PC-3 (cell line): ENCODE measurements at regions of chr16 and their contacts with region 1.

Region 1: DNA sequence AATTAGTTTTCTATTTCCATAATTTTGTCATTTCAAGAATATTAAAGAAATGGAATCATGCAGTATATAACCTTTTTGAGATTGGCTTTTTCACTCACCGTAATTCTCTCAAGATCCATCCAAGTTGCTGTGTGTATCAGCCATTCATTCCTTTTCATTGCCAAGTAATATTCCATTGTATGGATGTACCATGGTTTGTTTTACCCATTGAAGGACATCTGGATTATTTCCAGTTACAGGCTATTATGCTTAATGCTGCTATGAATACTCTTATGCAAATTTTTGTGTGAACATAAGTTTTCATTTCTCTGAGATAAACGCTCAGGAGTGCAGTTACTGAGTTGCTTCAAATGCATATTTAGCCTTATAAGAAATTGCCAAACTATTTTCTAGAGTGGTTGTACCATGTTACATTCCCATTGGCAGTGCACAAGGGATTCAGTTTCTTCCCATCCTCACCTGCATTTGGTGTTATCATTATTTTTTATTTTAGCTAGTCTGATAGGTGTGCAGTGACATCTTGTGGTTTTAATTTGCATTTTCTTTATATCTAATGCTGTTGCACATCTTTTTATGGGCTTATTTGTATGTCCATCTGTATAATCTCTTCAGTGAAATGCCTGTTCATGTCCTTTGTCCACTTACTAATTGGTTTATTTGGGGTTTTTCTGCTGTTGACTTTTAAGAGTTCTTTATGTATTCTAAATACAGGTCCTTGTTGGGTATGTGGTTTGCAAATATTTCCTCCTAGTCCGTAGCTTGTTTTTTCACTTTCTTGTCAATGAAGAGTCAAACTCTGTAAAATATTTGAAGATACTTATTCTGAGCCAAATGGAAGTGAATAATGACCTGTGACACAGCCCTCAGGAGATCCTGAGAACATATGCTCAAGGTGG is 32.7 kb downstream of the BMERB1 start:
- DNase-seq: peak; percentile 60
- ATAC-seq: no peak
- H3K4me3 ChIP-seq: no peak overlapping the region
- H3K27ac ChIP-seq: no peak overlapping the region
- H3K4me1 ChIP-seq: peaks cover 11% of the 10 kb centered on the region
- H3K27me3 ChIP-seq: no peaks in the 10 kb centered on the region
- CTCF ChIP-seq: peak; percentile 68

Region 2: DNA sequence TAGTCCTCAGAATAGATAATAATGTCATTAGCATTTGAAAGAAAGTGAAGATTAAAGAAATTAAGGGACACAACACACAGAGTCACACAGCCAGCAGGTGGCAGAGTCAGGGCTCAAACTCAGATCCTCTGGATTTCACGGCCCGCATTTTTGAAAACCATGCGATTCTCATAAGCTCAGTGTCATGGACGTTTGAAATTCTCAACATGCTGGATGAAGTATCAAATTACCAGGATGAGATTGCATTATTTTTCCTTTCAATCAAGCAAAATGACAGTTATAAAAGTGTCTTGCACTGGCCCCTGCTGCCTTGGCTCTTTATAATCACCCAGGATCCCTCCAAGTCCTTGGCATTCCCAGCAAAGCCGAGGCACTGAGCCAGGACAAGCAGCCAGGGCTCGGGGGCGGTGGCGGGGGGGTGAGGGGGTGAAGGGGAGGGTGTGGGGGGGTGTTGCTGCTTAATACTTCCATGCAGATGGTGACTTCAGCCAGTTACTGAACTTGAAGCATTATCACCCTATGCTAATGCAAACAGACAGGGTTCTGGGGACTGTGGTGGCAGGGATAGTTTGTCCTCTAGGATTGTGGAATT is 39.4 kb before region 1 on chr16:
- CTCF ChIA-PET with region 1: interaction called, 6 read pairs
- POLR2A ChIA-PET with region 1: no interaction called
- intact Hi-C with region 1: loop called (anchors 5 kb)
- DNase-seq: peak; percentile 68
- ATAC-seq: peak; percentile 76
- H3K4me3 ChIP-seq: no peak overlapping the region; the same call in 1 of the 2 replicates
- H3K27ac ChIP-seq: peak overlapping the region; percentile 48; the same call in 1 of the 2 replicates
- H3K4me1 ChIP-seq: peaks cover 3% of the 10 kb centered on the region; the same call in 1 of the 2 replicates
- H3K27me3 ChIP-seq: no peaks in the 10 kb centered on the region
- CTCF ChIP-seq: peak; percentile 72

Region 3: DNA sequence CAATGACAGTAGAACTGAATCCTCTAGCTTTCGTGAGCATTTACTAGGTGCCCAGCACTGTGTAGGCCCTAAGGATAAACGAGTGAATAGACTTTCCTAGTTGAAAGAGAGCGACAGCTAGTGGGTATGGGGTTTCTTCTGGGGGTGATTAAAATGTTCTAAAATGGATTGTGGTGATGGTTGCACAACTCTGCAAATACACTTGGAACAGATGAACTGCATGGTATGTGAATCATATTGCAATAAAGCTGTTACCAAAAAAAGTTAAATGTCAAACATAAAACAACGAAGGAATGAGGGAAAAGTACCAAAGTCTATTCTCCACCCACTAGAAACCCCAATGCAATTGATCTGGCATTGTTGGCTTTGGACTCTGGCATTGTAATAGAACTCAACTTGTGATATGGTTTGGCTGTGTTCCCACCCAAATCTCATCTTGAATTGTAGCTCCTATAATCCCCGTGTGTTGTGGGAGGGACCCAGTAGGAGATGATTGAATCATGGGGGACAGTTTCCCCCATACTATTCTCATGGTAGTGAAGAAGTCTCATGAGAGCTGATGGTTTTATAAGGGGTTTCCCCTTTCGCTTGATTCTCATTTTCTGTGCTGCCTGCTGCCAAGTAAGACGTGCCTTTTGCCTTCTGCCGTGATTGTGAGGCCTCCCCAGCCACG is 105.3 kb after region 1 on chr16:
- CTCF ChIA-PET with region 1: no interaction called
- POLR2A ChIA-PET with region 1: no interaction called
- intact Hi-C with region 1: no loop called
- DNase-seq: peak; percentile 57
- ATAC-seq: peak; percentile 43
- H3K4me3 ChIP-seq: no peak overlapping the region
- H3K27ac ChIP-seq: peak overlapping the region; percentile 41
- H3K4me1 ChIP-seq: peaks cover 26% of the 10 kb centered on the region
- H3K27me3 ChIP-seq: no peaks in the 10 kb centered on the region
- CTCF ChIP-seq: no peak